ENCODE measurements at regions of chrX and their contacts with region 1.

Region 1: DNA sequence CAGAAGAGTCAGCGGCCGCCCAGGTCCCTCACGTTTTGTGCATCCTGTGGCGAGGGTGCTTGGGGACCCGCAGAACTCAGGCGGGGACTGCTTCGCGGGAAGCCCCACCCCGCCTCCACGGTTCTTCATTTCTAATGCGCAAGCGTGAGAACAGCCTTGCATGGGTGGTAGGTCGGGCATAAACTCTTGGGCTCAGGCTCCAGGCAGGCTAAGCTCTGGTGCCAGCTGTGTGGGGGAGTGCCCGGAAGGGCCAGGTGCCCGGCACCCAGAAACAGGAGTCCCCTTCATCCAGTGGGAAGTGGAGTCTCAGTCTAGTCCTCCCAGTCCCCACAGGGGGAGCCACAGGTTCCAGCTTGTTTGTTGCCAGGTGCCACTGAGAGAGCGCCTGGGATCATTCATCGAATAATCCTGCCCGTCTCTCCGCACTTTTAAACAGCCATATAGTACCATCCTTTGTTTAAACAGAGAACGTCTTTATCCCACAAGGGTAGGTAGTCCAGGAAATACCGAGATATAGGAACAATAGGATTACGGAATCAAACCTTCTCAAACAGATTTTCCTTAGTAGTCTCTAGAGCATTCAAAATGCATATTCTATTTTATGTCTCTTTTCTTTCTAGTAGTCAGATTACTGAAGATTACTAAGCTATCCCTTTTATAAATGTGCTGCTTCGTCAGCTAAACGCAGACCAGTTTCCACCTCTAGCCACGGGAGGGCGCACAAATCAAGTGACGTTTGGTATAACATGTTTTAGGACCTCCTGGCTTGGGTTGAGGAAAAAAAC is 12.7 kb upstream of the RBBP7 start:
- DNase-seq: peak; percentile 77
- H3K4me3 ChIP-seq: peak overlapping the region; percentile 16 to 53 (median 34)
- H3K27ac ChIP-seq: peak overlapping the region; percentile 75 to 82 (median 80)
- H3K4me1 ChIP-seq: no peaks in the 10 kb centered on the region
- H3K27me3 ChIP-seq: no peaks in the 10 kb centered on the region
- CTCF ChIP-seq: peak; percentile 49 to 65 (median 58)
- EP300 ChIP-seq: no peak
- POLR2A ChIP-seq: no peak

Region 2: DNA sequence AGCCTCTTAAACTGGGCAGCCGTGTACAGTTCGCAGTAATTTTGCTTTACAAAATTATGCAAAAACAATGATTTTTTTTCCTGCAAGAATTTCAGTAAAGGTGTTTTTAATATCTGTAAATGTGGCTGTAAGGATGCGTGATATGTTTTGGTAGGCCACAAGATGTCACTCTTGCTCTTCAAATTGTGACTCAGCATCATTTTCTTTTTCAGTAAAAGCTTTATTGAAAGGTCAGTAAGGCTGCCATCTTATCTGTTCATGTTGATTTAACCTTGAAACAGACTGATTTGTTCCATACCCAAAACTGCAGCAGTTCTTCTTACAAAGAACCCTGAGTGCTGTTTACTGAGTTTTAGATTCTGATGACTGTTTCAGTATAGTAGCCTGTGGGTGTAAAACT is 56.7 kb before region 1 on chrX:
- in situ Hi-C with region 1: loop called in 1 of 4 experiments (anchors 10 kb)
- intact Hi-C with region 1: no loop called
- DNase-seq: no peak
- H3K4me3 ChIP-seq: no peak overlapping the region
- H3K27ac ChIP-seq: peak overlapping the region in 1 of 4 donors; percentile 72
- H3K4me1 ChIP-seq: no peaks in the 10 kb centered on the region
- H3K27me3 ChIP-seq: no peaks in the 10 kb centered on the region
- CTCF ChIP-seq: peak; percentile 27 to 43 (median 40)
- EP300 ChIP-seq: no peak
- POLR2A ChIP-seq: no peak

Region 3: GRCh38 chrX:17046478-17047097 is 163.7 kb after region 1 on chrX:
- in situ Hi-C with region 1: loop called in 3 of 4 experiments (anchors 10 to 25 kb)
- intact Hi-C with region 1: no loop called
- DNase-seq: peak; percentile 67
- H3K4me3 ChIP-seq: no peak overlapping the region
- H3K27ac ChIP-seq: no peak overlapping the region
- H3K4me1 ChIP-seq: no peaks in the 10 kb centered on the region
- H3K27me3 ChIP-seq: no peaks in the 10 kb centered on the region
- CTCF ChIP-seq: peak; percentile 60 to 76 (median 67)
- EP300 ChIP-seq: no peak
- POLR2A ChIP-seq: no peak

Measured in transverse colon (tissue), 4 donors.